Activated CD4-positive, alpha-beta T cell treated with anti-CD3 and anti-CD28 coated beads for 36 hours (primary cell): ENCODE measurements at regions of chr4 and their contacts with region 1.

Region 1: DNA sequence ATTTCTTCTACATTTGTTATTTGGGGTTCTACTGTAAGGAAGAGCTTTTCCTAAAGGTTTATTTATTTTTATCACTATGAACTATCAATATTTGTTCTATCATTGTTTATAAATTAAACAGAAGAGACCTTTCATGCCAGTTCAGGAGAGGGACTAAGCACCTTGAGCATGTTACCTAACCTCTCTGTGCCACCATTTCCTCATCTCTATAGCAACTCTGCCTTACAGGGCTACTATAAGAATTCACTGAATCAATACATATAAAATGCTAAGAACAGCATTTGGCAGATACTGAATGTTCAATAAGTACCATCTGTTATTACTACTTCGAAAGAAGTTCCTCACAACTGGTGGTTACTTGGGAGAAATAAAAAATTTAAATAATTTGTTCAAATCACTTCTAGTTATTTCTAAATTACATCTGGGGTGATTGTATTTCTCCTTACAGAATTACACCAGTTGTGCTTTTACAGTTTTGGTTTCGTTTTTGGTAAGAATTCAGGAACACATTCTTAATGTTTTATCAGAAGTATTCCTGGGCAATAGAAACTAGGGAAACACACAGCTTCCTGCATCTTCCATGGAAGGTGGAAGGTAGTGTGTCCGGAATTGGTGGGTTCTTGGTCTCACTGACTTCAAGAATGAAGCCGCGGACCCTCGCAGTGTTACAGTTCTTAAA is 32.9 kb downstream of the EREG start:
- DNase-seq: no peak
- ATAC-seq: peak; percentile 80
- H3K4me3 Mint-ChIP-seq: peak overlapping the region; percentile 84
- H3K27ac Mint-ChIP-seq: peak overlapping the region; percentile 95
- H3K4me1 Mint-ChIP-seq: peaks cover 8% of the 10 kb centered on the region
- H3K27me3 Mint-ChIP-seq: no peaks in the 10 kb centered on the region

Region 2: DNA sequence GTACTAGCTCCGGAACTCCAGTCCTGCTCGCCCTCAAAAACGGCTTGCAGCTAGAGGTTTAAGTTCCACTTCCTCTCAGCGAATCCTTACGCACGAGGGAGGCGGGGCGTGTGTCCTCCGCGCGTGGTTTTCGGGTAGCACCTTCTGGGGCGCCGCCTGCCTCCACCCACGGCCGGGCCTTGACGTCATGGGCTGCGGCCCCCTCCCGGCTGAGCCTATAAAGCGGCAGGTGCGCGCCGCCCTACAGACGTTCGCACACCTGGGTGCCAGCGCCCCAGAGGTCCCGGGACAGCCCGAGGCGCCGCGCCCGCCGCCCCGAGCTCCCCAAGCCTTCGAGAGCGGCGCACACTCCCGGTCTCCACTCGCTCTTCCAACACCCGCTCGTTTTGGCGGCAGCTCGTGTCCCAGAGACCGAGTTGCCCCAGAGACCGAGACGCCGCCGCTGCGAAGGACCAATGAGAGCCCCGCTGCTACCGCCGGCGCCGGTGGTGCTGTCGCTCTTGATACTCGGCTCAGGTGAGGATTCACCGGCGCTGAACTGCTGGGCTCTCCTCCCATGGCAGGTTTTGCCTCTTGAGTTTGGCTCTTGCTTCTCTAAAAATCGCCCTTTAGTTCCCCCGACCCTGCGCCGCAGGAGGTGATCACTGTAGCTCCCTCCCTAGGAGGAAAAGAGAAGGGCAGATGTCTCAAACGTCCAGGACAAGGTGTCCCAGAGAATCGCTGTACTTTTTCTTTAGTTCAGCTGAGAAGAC is 47.2 kb after region 1 on chr4 and contains the start of gene AREG:
- CTCF ChIA-PET with region 1: no interaction called
- POLR2A ChIA-PET with region 1: interaction called, 3 read pairs
- intact Hi-C with region 1: loop called in 1 of 2 experiments (anchors 1 kb)
- DNase-seq: peak; percentile 92
- ATAC-seq: peak; percentile 88
- H3K4me3 Mint-ChIP-seq: peak within 1 kb of the TSS; percentile 92
- H3K27ac Mint-ChIP-seq: peak within 1 kb of the TSS; percentile 83
- H3K4me1 Mint-ChIP-seq: peaks cover 13% of the 10 kb centered on the region
- H3K27me3 Mint-ChIP-seq: no peaks in the 10 kb centered on the region
- total RNA-seq, gene AREG: 0.57 to 0.91 TPM